Activated T-helper 2 cell treated with anti-CD3 and anti-CD28 coated beads, Interferon-gamma antibody, Interleukin-2, Interleukin-4, amounts not matched to agents 10 μg/mL and 5 μg/mL and 100 μg/mL, durations not matched to agents 14 hours and 24 hours and 36 hours (primary cell): ENCODE measurements at regions of chr16 and their contacts with region 1.

Region 1: DNA sequence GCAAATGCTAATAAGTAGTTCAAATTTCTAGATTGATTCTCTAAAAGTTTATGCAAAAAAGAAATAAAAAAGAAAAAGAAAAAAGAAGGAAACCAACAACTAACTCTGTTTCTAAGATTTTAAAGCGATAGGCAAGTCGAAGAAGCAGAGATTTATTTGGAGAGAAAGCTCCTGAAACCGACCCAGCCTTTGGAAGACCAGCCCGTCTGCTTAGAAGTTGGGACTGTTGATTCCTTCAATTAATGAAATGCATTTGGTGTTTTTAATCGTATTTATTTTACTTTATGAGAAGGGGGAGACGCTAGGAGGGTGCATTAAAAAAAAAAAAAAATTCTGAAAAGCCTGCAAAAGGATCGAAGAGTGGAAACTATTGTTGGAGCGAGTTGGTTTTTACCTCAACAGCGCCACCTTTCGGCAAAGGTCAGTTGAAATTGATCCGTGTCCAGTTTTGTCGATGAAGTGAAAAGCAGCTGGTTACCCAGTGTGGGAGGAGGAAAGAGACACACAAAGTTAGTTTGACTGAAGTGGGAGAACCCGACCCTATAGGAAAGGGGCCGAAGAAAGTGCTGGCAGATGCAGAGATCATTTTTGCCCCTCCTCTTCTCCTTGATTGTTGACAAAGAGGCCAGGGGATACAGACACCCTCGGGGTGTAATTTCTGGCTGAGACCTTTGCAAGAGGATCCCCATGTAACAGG is 1.5 kb upstream of the MAF start:
- DNase-seq: peak; percentile 76
- H3K4me3 Mint-ChIP-seq: peak overlapping the region; percentile 96
- H3K27ac Mint-ChIP-seq: peak overlapping the region; percentile 85
- H3K4me1 Mint-ChIP-seq: peaks cover 47% of the 10 kb centered on the region
- H3K27me3 Mint-ChIP-seq: peaks cover 3% of the 10 kb centered on the region

Region 2: DNA sequence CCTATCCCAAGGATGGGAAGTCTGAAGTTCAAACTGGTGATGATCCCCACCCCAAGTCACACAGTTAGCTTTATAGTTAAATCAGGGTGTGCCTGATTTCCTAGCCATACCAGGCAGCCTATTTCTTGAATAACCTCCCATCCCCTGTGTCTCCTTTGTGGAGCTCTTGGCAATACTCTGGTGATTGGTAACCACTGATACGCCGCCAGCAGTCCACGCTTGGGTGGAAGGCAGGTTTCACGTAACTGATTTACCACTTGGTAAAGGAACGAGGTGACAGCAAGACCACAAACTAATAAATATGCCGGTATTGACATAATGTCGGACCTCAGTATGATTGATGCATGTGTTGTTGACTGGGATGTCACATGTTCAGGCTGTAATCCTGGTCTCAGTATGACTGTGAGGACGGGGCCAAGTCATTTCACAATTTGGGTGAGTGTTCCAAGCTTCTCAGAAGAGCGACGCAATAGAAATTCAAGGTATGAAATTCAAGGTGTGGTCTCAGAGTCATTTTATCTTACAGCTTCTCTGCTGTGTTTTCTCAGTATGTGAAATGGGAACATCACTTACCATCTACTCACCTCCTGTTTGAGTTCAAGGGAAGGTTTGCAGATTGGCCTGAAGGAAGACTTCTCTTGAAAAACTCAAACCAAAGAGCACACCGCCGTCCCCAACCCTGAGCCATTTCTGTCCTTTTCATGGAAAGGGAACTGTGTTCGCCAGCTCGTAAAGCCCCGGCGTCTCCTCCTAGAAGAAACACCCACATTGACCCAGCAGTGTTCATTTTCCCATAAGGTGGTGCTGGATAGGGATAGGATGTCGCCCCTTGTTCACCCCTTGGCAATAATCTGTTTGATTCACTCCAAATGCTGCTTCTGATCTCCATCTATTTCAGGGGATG is 823.7 kb before region 1 on chr16:
- intact Hi-C with region 1: loop called (anchors 2 kb)
- DNase-seq: peak; percentile 54
- H3K4me3 Mint-ChIP-seq: peak overlapping the region; percentile 58
- H3K27ac Mint-ChIP-seq: peak overlapping the region; percentile 91
- H3K4me1 Mint-ChIP-seq: peaks cover 61% of the 10 kb centered on the region
- H3K27me3 Mint-ChIP-seq: no peaks in the 10 kb centered on the region

Region 3: GRCh38 chr16:79071424-79071823 is 530.7 kb before region 1 on chr16:
- intact Hi-C with region 1: loop called (anchors 1 kb)
- DNase-seq: no peak
- H3K4me3 Mint-ChIP-seq: no peak overlapping the region
- H3K27ac Mint-ChIP-seq: no peak overlapping the region
- H3K4me1 Mint-ChIP-seq: peaks cover 75% of the 10 kb centered on the region
- H3K27me3 Mint-ChIP-seq: no peaks in the 10 kb centered on the region

Region 4: GRCh38 chr16:79269211-79269863 is 332.7 kb before region 1 on chr16:
- intact Hi-C with region 1: loop called (anchors 2 kb)
- DNase-seq: peak; percentile 68
- H3K4me3 Mint-ChIP-seq: peak overlapping the region; percentile 38
- H3K27ac Mint-ChIP-seq: peak overlapping the region; percentile 87
- H3K4me1 Mint-ChIP-seq: peaks cover 89% of the 10 kb centered on the region
- H3K27me3 Mint-ChIP-seq: no peaks in the 10 kb centered on the region

Region 5: GRCh38 chr16:79613009-79613408 is 10.9 kb after region 1 on chr16:
- intact Hi-C with region 1: loop called (anchors 1 kb)
- DNase-seq: no peak
- H3K4me3 Mint-ChIP-seq: no peak overlapping the region
- H3K27ac Mint-ChIP-seq: no peak overlapping the region
- H3K4me1 Mint-ChIP-seq: peaks cover 48% of the 10 kb centered on the region
- H3K27me3 Mint-ChIP-seq: peaks cover 7% of the 10 kb centered on the region

Region 6: DNA sequence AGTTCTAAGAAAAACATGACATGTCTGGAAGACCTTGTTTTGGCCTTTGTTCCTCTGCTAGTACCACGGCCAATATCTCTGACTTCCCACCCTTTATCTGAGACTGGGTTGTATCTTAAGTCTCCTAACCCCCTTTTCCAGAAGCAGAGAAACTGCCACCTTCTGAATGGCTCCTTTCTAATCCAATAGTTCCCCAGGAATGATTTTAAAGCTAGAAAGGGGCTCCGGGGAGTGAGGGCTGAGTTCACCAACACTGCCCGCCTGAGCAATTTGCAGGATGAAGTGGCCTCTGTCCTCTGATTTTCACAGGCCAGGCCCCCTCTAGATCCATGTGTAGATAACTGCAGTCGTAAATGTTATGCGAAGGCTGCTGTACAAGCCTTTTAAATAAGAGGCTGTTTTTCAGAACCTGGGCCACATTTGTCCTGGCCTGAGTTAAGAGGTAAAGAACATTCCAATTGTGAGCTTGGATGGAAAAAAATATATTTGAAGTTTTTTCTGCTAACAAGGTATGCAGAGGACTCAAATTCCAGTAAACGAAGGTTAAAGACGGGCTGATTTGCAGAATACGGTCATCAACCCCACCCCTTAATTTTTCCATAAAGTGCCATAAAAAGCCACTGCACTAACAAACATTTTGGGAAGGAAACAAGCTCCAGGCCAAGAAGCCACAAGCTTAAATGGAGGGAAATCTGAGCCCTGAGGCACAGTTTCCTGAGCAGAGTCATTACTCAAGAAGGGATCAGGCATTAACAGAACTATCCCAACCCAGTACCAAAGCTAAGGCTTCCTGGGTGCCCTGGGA is 115.5 kb after region 1 on chr16:
- intact Hi-C with region 1: loop called (anchors 5 kb)
- DNase-seq: no peak
- H3K4me3 Mint-ChIP-seq: peak overlapping the region; percentile 47
- H3K27ac Mint-ChIP-seq: peak overlapping the region; percentile 63
- H3K4me1 Mint-ChIP-seq: peaks cover 40% of the 10 kb centered on the region
- H3K27me3 Mint-ChIP-seq: peaks cover 7% of the 10 kb centered on the region

Region 7: DNA sequence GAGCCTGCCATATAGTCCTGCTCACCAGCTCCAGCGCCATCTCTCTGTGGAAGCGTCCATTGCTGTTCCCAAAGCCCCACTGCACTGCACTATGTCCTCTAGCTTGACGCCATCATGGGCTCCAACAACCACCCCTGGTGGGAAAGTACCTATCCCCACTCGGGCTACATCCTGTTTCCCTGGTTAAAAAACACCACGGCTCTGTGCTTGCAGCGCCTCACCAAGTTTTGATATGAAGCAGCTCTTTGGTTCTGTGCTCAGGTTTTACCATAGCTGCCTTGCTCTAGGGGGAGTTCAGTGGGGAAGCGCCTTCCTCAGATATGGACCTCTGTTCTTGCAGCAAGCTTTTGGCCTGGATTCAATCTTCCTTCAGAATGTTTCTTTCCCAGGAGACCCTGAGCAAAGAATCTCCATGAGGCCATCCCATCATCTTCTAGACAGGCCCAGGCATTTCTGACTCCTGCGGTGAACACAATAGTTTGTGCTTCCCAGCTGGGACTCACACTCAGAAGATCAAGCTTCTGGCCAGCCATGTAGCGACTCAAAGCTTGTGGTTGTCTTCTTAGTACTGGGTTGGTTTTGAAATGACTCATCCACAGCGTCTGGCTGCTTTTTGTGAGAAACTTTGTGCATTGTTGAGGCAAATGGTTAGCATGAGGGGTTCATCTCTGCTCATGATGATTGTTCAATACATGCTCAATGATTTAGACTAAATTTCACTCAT is 978.2 kb after region 1 on chr16:
- intact Hi-C with region 1: loop called (anchors 10 kb)
- DNase-seq: peak; percentile 76
- H3K4me3 Mint-ChIP-seq: peak overlapping the region; percentile 82
- H3K27ac Mint-ChIP-seq: peak overlapping the region; percentile 99
- H3K4me1 Mint-ChIP-seq: peaks cover 51% of the 10 kb centered on the region
- H3K27me3 Mint-ChIP-seq: no peaks in the 10 kb centered on the region